Breast epithelium (tissue), 4 donors: ENCODE measurements at regions of chr6 and their contacts with region 1.

Region 1: DNA sequence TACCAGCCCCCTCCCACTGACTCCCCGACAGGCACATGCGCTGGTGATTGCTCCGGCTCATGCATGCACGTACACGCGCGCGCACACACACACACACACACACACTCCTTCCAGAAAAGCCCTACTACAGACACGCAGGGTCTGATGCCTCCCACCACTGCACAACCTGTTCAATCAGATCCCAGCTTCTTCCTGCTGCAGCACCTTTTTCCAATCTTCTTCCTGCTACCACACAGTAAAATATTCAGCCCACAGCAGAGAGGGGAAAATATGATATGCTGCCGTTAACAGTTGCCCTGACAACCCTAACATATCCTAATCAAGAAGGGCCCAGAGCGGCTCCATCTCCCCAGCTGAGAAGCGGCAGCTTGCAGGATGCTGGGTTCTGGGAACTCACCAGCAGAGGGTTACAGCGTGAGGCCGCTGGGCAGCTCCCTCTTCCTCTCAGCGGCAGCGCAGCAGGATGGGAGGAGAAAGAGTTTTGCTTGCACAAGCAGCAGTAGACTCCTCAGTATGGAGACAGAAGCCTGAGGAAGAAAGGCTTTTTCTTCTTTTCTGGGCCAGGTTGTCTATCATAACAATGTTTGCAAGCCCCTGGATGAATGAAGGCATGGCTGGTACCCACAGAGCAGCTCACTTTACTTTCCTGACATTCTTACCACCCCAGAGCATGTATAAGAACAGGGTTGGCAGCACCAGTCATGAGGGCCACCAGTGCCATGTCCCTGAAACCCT is 23.9 kb downstream of the MAP7 start:
- DNase-seq: peak in 1 of 2 donors; percentile 31
- H3K4me3 ChIP-seq: peak overlapping the region in 1 of 3 donors; percentile 35
- H3K27ac ChIP-seq: no peak overlapping the region
- H3K4me1 ChIP-seq: peaks cover 0 to 5% of the 10 kb centered on the region in 2 donors
- H3K27me3 ChIP-seq: no peaks in the 10 kb centered on the region
- CTCF ChIP-seq: no peak
- POLR2A ChIP-seq: no peak

Region 2: GRCh38 chr6:136510782-136511181 is 15.6 kb before region 1 on chr6:
- intact Hi-C with region 1: no loop called
- DNase-seq: no peak
- H3K4me3 ChIP-seq: no peak overlapping the region
- H3K27ac ChIP-seq: peak overlapping the region in 1 of 2 donors; percentile 56
- H3K4me1 ChIP-seq: peaks cover 0 to 3% of the 10 kb centered on the region in 2 donors
- H3K27me3 ChIP-seq: no peaks in the 10 kb centered on the region
- CTCF ChIP-seq: no peak
- POLR2A ChIP-seq: no peak

Region 3: DNA sequence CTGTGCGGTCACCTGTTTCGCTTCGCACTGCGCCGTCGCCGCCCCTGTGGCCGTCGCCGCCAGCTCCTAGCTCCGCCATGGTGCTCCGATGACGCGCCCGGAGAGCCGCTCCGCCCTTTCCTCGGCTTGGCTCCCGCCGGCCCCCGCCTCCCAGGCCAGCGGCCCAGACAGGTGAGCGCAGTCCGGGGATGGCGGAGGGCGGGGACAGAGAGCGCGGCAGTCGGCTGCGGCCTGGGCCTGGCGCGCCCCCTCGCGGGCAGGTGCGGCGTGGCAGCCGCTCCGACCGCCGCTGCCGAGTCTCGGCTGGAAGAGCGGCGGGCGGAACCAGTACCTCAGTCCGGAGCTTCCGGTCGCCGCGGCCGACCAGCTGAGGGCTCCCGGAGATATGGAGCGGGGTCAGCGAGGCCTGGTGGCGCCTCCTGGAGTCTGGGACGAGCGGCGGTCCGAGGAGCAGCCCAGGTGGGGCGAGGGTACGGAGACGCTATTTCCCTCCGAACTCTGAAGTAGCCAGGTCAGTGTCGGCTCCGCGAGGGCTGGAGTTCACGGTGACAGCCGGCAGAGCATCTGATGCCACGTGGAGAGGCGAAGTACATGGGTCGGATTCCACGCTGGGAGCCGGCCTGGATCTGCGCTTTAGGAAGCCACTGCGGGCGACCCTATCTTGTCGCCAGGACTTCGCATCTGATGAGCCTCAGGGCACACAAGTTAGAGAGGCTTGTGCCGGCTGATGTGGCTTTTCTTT is 24.1 kb after region 1 on chr6 and contains the start of gene MAP7:
- intact Hi-C with region 1: loop called (anchors 1 kb)
- DNase-seq: peak; percentile 87 to 89
- H3K4me3 ChIP-seq: peak within 1 kb of the TSS; percentile 70 to 81 (median 76)
- H3K27ac ChIP-seq: peak within 1 kb of the TSS; percentile 94 to 95
- H3K4me1 ChIP-seq: peaks cover 0 to 4% of the 10 kb centered on the region in 2 donors
- H3K27me3 ChIP-seq: no peaks in the 10 kb centered on the region
- CTCF ChIP-seq: peak; percentile 57 to 90 (median 58)
- POLR2A ChIP-seq: no peak
- total RNA-seq, gene MAP7: 14.2 to 42.4 (median 16.4) TPM